HEK293 (cell line): ENCODE measurements at regions of chrX and their contacts with region 1.

Region 1: GRCh38 chrX:133698298-133698697 is 283.0 kb upstream of the GPC4 start:
- H3K4me3 ChIP-seq: no peak overlapping the region
- H3K27ac ChIP-seq: no peak overlapping the region
- H3K4me1 ChIP-seq: 0 out of 2 replicates have a peak, but pooled peaks cover 3% of the 10 kb centered on the region
- CTCF ChIP-seq: no peak

Region 2: GRCh38 chrX:133776072-133776471 is 77.8 kb after region 1 on chrX:
- CTCF ChIA-PET with region 1: interaction called, 22 read pairs
- POLR2A ChIA-PET with region 1: no interaction called
- H3K4me3 ChIP-seq: no peak overlapping the region
- H3K27ac ChIP-seq: no peak overlapping the region
- H3K4me1 ChIP-seq: 0 out of 2 replicates have a peak, but pooled peaks cover 3% of the 10 kb centered on the region
- CTCF ChIP-seq: no peak